ENCODE measurements at regions of chr16 and their contacts with region 1.

Region 1: GRCh38 chr16:8892101-8892575 is 10.0 kb downstream of the LITAFD start:
- DNase-seq: peak; percentile 53
- ATAC-seq: no peak
- H3K4me3 ChIP-seq: no peak overlapping the region
- H3K4me3 Mint-ChIP-seq: peak overlapping the region; percentile 68
- H3K27ac ChIP-seq: peak overlapping the region; percentile 41 to 86
- H3K27ac Mint-ChIP-seq: peak overlapping the region; percentile 95
- H3K4me1 ChIP-seq: peaks cover 18 to 40% of the 10 kb centered on the region in 2 donors
- H3K4me1 Mint-ChIP-seq: peaks cover 36% of the 10 kb centered on the region
- H3K27me3 ChIP-seq: no peaks in the 10 kb centered on the region
- H3K27me3 Mint-ChIP-seq: no peaks in the 10 kb centered on the region
- CTCF ChIP-seq: no peak

Region 2: DNA sequence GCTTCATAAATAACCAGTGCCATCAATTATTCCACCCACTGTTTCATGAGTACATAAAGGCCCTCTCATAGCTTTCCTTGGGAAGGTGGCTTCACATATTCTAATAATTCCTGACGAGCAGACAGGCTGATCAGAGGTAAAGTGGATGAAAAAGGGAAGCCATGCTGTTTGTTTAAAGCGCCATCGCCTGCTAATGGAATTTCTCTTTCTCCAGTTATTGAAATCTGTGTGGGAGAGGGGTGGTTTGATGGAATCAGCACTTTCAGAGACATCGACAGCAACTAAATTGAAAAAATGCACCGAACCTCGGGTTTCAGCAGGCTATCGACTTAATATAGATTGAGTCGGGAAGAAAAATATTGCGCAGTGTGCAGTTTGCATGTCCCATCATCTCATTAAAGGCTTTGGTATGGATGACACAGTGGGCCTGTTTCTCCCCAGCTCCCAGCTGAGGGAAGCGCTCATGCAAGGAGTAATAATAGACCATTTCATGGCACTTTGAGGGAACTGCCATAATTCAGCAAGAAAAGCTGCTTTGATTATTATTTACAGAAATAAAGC is 1087.4 kb before region 1 on chr16:
- CTCF ChIA-PET with region 1: no interaction called
- POLR2A ChIA-PET with region 1: no interaction called
- intact Hi-C with region 1: no loop called
- DNase-seq: no peak
- ATAC-seq: no peak
- H3K4me3 ChIP-seq: no peak overlapping the region
- H3K4me3 Mint-ChIP-seq: no peak overlapping the region
- H3K27ac ChIP-seq: no peak overlapping the region
- H3K27ac Mint-ChIP-seq: no peak overlapping the region
- H3K4me1 ChIP-seq: no peaks in the 10 kb centered on the region
- H3K4me1 Mint-ChIP-seq: no peaks in the 10 kb centered on the region
- H3K27me3 ChIP-seq: no peaks in the 10 kb centered on the region
- H3K27me3 Mint-ChIP-seq: no peaks in the 10 kb centered on the region
- CTCF ChIP-seq: no peak

Region 3: GRCh38 chr16:8621572-8622314 is 270.4 kb before region 1 on chr16 and contains the start of gene METTL22:
- CTCF ChIA-PET with region 1: no interaction called
- POLR2A ChIA-PET with region 1: interaction called, 4 read pairs
- intact Hi-C with region 1: loop called (anchors 5 kb)
- DNase-seq: peak; percentile 94
- ATAC-seq: peak; percentile 99
- H3K4me3 ChIP-seq: peak within 1 kb of the TSS; percentile 88 to 100 (median 98)
- H3K4me3 Mint-ChIP-seq: peak within 1 kb of the TSS; percentile 94
- H3K27ac ChIP-seq: peak within 1 kb of the TSS; percentile 75 to 86
- H3K27ac Mint-ChIP-seq: peak within 1 kb of the TSS; percentile 86
- H3K4me1 ChIP-seq: peaks cover 12 to 15% of the 10 kb centered on the region in 2 donors
- H3K4me1 Mint-ChIP-seq: peaks cover 21% of the 10 kb centered on the region
- H3K27me3 ChIP-seq: peaks cover 0 to 6% (median 0%) of the 10 kb centered on the region in 4 experiments
- H3K27me3 Mint-ChIP-seq: peaks cover 9% of the 10 kb centered on the region
- CTCF ChIP-seq: no peak
- total RNA-seq, gene METTL22: 62.9 and 73.8 TPM in 2 replicates

Region 4: GRCh38 chr16:8878521-8878911 is 13.6 kb before region 1 on chr16:
- CTCF ChIA-PET with region 1: interaction called, 46 read pairs
- POLR2A ChIA-PET with region 1: no interaction called
- intact Hi-C with region 1: no loop called
- DNase-seq: no peak
- ATAC-seq: no peak
- H3K4me3 ChIP-seq: no peak overlapping the region
- H3K4me3 Mint-ChIP-seq: no peak overlapping the region
- H3K27ac ChIP-seq: no peak overlapping the region
- H3K27ac Mint-ChIP-seq: no peak overlapping the region
- H3K4me1 ChIP-seq: peaks cover 0 to 5% of the 10 kb centered on the region in 2 donors
- H3K4me1 Mint-ChIP-seq: peaks cover 7% of the 10 kb centered on the region
- H3K27me3 ChIP-seq: peaks cover 0 to 6% (median 3%) of the 10 kb centered on the region in 4 experiments
- H3K27me3 Mint-ChIP-seq: peaks cover 8% of the 10 kb centered on the region
- CTCF ChIP-seq: no peak

Region 5: GRCh38 chr16:8936421-8936820 is 44.3 kb after region 1 on chr16:
- CTCF ChIA-PET with region 1: interaction called, 27 read pairs
- POLR2A ChIA-PET with region 1: no interaction called
- intact Hi-C with region 1: loop called (anchors 2 kb)
- DNase-seq: peak; percentile 69
- ATAC-seq: peak; percentile 89
- H3K4me3 ChIP-seq: no peak overlapping the region
- H3K4me3 Mint-ChIP-seq: no peak overlapping the region
- H3K27ac ChIP-seq: no peak overlapping the region
- H3K27ac Mint-ChIP-seq: peak overlapping the region; percentile 7
- H3K4me1 ChIP-seq: peaks cover 58 to 63% of the 10 kb centered on the region in 2 donors
- H3K4me1 Mint-ChIP-seq: peaks cover 81% of the 10 kb centered on the region
- H3K27me3 ChIP-seq: no peaks in the 10 kb centered on the region
- H3K27me3 Mint-ChIP-seq: no peaks in the 10 kb centered on the region
- CTCF ChIP-seq: peak; percentile 73

Region 6: DNA sequence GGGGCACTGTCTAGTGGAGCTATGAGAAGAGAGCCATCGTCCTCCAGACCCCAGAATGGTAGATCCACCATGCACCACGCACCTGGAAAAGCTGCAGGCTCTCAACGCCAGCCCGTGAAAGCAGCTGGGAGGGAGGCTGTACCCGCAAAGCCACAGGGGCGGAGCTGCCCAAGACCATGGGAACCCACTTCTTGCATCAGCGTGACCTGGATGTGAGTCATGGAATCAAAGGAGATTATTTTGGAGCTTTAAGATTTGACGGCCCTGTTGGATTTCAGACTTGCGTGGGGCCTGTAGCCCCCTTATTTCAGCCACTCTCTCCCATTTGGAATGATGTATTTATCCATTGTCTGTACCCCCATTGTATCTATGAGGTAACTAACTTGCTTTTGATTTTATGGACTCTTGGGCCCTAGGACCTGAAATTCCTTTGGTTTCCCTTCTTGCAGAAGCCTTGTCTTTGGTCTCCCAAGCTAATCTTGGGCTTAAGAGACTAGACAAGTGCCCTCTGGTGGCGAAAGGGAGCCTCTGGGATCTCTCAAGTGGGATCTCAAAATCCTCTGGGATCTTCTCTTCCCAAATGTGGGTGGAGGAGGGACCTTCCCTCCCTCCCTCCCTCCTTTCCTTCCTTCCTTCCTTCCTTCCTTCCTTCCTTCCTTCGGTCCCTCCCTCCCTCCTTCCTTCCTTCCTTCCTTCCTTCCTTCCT is 141.1 kb after region 1 on chr16:
- CTCF ChIA-PET with region 1: interaction called, 24 read pairs
- POLR2A ChIA-PET with region 1: no interaction called
- intact Hi-C with region 1: no loop called
- DNase-seq: peak; percentile 41
- ATAC-seq: no peak
- H3K4me3 ChIP-seq: no peak overlapping the region
- H3K4me3 Mint-ChIP-seq: no peak overlapping the region
- H3K27ac ChIP-seq: no peak overlapping the region
- H3K27ac Mint-ChIP-seq: no peak overlapping the region
- H3K4me1 ChIP-seq: no peaks in the 10 kb centered on the region
- H3K4me1 Mint-ChIP-seq: no peaks in the 10 kb centered on the region
- H3K27me3 ChIP-seq: peaks cover 0 to 6% (median 0%) of the 10 kb centered on the region in 4 experiments
- H3K27me3 Mint-ChIP-seq: peaks cover 2% of the 10 kb centered on the region
- CTCF ChIP-seq: peak; percentile 20

Region 7: DNA sequence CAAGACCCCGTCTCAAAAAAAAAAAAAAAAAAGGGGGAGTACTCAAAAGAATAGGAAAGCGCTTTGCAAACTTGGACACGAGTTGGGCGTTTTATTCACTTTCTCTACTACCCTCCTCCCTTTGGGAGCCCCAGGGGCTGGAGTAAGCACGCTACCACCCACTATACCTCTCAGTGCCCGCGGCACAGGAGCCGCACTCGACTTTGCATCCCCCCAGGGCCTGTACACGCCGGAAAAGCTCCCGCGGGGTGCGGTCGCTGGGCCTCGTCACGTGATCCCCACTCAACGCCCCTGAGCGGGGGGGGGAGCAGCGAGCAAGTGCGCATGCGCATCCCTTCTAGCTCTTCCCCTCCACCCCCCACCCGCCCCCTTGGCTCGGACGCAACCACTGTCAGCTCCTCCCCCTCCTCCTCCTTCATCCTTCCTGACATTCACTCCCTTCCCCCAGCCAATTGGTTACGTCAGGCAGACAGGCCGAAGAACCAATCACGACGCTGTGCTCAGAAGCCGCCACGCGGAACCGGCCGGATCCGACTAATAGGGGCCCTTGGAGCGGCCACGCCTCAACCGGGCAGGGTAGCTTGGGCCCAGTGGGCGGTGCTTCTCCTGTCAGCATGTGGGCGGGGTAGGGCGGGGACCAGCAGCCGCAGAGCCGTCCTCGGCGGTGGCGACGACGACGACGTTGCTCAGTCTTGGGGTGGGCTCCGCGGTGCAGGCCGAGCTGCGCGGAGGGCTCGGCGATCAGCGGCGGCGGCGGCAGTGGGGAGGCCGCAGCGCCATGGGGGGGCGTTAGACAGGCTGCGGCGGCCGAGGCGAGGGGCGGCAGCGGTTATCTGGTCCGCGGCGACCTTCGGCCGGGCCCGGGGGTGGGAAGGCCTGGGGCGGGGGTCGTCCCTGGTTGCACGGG is 199.1 kb after region 1 on chr16 and contains the start of gene HAPSTR1:
- CTCF ChIA-PET with region 1: interaction called, 11 read pairs
- POLR2A ChIA-PET with region 1: interaction called, 18 read pairs
- intact Hi-C with region 1: loop called (anchors 1 kb)
- DNase-seq: peak; percentile 100
- ATAC-seq: peak; percentile 84
- H3K4me3 ChIP-seq: peak within 1 kb of the TSS; percentile 84 to 95 (median 88)
- H3K4me3 Mint-ChIP-seq: peak within 1 kb of the TSS; percentile 97
- H3K27ac ChIP-seq: peak within 1 kb of the TSS; percentile 90 to 98
- H3K27ac Mint-ChIP-seq: peak within 1 kb of the TSS; percentile 98
- H3K4me1 ChIP-seq: peaks cover 31 to 37% of the 10 kb centered on the region in 2 donors
- H3K4me1 Mint-ChIP-seq: peaks cover 38% of the 10 kb centered on the region
- H3K27me3 ChIP-seq: no peaks in the 10 kb centered on the region
- H3K27me3 Mint-ChIP-seq: no peaks in the 10 kb centered on the region
- CTCF ChIP-seq: no peak
- total RNA-seq, gene HAPSTR1: 99.2 and 101 TPM in 2 replicates

Region 8: GRCh38 chr16:10181196-10182162 is 1289.3 kb after region 1 on chr16:
- CTCF ChIA-PET with region 1: no interaction called
- POLR2A ChIA-PET with region 1: no interaction called
- intact Hi-C with region 1: loop called (anchors 5 kb)
- DNase-seq: peak; percentile 77
- ATAC-seq: peak; percentile 61
- H3K4me3 ChIP-seq: peak overlapping the region in 4 of 5 experiments; percentile 18 to 59 (median 46)
- H3K4me3 Mint-ChIP-seq: peak overlapping the region; percentile 86
- H3K27ac ChIP-seq: no peak overlapping the region
- H3K27ac Mint-ChIP-seq: no peak overlapping the region
- H3K4me1 ChIP-seq: peaks cover 29 to 35% of the 10 kb centered on the region in 2 donors
- H3K4me1 Mint-ChIP-seq: peaks cover 22% of the 10 kb centered on the region
- H3K27me3 ChIP-seq: peaks cover 0 to 57% (median 25%) of the 10 kb centered on the region in 4 experiments
- H3K27me3 Mint-ChIP-seq: peaks cover 72% of the 10 kb centered on the region
- CTCF ChIP-seq: peak; percentile 79

Region 9: GRCh38 chr16:10242916-10243315 is 1350.8 kb after region 1 on chr16:
- CTCF ChIA-PET with region 1: no interaction called
- POLR2A ChIA-PET with region 1: no interaction called
- intact Hi-C with region 1: no loop called
- DNase-seq: peak; percentile 37
- ATAC-seq: no peak
- H3K4me3 ChIP-seq: no peak overlapping the region
- H3K4me3 Mint-ChIP-seq: peak overlapping the region; percentile 18
- H3K27ac ChIP-seq: no peak overlapping the region
- H3K27ac Mint-ChIP-seq: no peak overlapping the region
- H3K4me1 ChIP-seq: peaks cover 8 to 11% of the 10 kb centered on the region in 2 donors
- H3K4me1 Mint-ChIP-seq: peaks cover 8% of the 10 kb centered on the region
- H3K27me3 ChIP-seq: peaks cover 0 to 3% (median 0%) of the 10 kb centered on the region in 4 experiments
- H3K27me3 Mint-ChIP-seq: peaks cover 7% of the 10 kb centered on the region
- CTCF ChIP-seq: no peak